ENCODE measurements at regions of chr7 and their contacts with region 1.

Region 1: GRCh38 chr7:135795846-135796570 is 47.4 kb upstream of the FAM180A start:
- DNase-seq: no peak
- H3K4me3 ChIP-seq: no peak overlapping the region
- H3K27ac ChIP-seq: peak overlapping the region; percentile 22 to 62 (median 41)
- H3K4me1 ChIP-seq: peaks cover 5 to 28% (median 19%) of the 10 kb centered on the region in 4 donors
- H3K27me3 ChIP-seq: no peaks in the 10 kb centered on the region
- CTCF ChIP-seq: no peak
- EP300 ChIP-seq: no peak
- POLR2A ChIP-seq: no peak

Region 2: DNA sequence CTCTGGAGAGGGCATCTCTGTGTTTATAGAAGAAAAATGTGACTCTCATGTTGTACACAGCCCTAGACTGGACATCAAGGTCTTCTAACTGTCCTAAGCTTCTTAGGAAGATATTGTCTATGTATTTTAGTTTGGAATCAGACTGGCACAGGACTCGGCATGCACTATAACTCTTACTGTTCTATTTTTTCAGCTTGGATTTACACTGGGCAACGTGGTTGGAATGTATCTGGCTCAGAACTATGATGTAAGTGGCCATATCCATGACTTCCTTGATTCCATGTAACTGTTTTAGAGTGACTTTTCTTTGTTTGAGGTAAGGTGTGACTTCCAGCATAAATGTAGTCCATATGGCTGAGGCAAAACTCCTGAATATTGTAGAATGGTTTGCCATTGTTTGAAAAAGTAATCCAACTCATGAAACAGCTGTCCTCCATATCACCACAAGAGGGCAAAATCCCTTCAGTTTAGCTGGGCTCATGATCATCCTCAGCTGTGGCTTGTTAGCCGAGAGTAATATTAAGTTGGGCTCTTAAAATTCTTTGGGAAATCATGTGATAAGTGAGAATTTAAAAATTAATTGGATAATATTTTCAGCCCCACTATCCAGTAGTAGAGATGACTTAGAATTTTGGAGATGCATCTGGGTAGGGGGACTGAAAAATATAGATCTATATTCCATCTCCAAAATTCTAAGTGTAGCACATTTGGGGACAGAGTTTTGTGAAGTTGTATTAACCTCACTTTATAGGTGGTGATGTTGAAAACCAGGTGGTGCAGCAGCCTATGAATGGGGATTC is 123.2 kb before region 1 on chr7:
- intact Hi-C with region 1: loop called (anchors 5 kb)
- DNase-seq: peak; percentile 47
- H3K4me3 ChIP-seq: no peak overlapping the region
- H3K27ac ChIP-seq: no peak overlapping the region
- H3K4me1 ChIP-seq: peaks cover 40 to 54% (median 42%) of the 10 kb centered on the region in 4 donors
- H3K27me3 ChIP-seq: no peaks in the 10 kb centered on the region
- CTCF ChIP-seq: peak; percentile 68 to 79 (median 72)
- EP300 ChIP-seq: no peak
- POLR2A ChIP-seq: no peak